Endothelial cell of umbilical vein (primary cell): ENCODE measurements at regions of chr9 and their contacts with region 1.

Region 1: DNA sequence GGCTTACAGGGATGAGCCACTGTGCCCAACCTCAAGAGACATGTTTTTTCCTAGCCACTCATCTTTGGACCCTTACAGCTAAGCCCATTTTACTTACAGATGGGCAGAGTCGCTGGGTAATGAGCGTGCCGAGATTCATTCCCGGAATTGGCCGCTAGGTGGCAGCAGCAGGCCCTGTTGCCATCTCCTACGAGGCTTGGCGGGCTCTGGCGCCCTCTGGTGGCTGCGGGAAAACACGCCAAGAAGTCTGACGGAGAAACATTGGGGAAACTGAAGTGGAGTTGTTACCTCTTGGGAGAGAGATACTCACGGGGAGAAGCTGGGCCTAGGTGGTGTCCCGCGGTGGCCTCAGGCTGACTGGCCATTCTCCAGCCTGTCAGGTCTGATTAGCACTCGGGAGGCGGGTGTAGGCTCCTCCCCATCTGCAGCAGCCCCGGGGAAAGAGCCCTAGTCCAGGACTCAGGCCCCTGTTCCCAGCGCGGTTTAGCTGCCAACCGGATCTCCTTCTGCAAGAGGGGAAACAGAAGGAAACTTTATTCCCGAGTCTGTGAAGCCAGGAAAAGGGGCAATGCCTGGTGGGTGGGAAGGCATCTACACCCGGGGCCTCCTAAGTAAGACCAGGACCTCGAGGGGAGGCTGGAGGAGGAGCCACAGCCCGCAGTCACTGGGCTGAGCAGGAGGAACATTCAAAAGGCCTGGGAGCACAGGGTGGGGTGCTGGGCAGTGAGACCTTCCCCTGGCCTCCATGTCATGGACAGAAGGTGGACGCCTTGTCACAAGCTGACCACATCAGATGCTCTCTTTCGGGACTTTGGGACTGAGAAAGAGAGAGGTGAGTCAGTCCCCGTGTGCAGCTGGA is 9.7 kb downstream of the PTGES2 start:
- DNase-seq: peak; percentile 93
- H3K4me3 ChIP-seq: no peak overlapping the region
- H3K27ac ChIP-seq: no peak overlapping the region
- H3K4me1 ChIP-seq: no peaks in the 10 kb centered on the region
- H3K27me3 ChIP-seq: no peaks in the 10 kb centered on the region
- CTCF ChIP-seq: peak; percentile 100
- POLR2A ChIP-seq: no peak

Region 2: GRCh38 chr9:127293328-127293727 is 824.5 kb before region 1 on chr9:
- CTCF ChIA-PET with region 1: no interaction called
- POLR2A ChIA-PET with region 1: no interaction called
- dilution Hi-C with region 1: no loop called
- intact Hi-C with region 1: no loop called
- DNase-seq: no peak
- H3K4me3 ChIP-seq: no peak overlapping the region
- H3K27ac ChIP-seq: no peak overlapping the region
- H3K4me1 ChIP-seq: no peaks in the 10 kb centered on the region
- H3K27me3 ChIP-seq: no peaks in the 10 kb centered on the region
- CTCF ChIP-seq: no peak
- POLR2A ChIP-seq: no peak

Region 3: DNA sequence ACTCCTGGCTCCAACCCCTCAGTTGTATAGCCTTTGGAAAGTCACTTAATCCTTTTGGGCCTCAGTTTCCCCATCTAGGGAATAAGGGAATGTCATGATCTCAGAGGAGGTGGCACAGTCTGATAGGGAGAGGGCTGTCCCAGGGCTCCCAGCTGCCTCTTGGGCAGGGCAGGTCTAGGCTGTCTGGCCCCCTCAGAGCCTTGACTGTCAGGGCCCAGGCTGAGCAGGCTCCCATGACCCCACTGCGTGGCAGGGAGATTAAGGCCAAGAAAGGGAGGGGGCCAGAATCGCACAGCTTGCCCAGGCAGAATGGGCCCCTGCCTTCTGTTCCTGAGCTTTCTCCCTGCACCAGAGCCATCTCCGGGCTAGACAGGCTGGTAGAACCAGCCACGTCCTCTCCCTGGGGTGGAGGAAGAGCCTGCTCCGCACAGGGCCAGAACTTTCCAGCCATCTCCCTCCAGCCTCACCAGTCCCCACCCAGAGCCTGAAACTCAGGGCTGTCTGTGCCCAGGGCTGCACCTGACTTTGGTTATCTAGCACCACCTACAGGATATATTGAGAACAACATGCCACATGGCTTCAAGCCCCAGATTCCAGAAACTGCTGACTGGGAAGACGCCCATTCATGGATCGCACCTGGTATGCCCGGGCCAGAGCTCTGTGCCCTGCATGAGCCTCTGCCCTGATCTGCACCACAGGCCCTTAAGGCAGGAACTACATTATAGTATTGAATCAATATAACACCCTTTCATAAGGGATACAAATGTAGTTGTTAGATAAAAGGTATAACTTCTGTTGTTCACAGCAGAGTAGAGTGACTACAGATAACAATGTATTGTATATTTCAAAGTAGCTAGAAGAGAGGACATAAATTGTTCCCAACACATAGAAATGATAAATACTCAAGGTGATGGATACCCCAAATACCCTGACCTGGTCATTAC is 82.7 kb before region 1 on chr9:
- CTCF ChIA-PET with region 1: interaction called, 15 read pairs
- POLR2A ChIA-PET with region 1: no interaction called
- dilution Hi-C with region 1: no loop called
- intact Hi-C with region 1: loop called (anchors 2 kb)
- DNase-seq: peak; percentile 84
- H3K4me3 ChIP-seq: no peak overlapping the region
- H3K27ac ChIP-seq: no peak overlapping the region
- H3K4me1 ChIP-seq: no peaks in the 10 kb centered on the region
- H3K27me3 ChIP-seq: no peaks in the 10 kb centered on the region
- CTCF ChIP-seq: peak; percentile 77 to 78
- POLR2A ChIP-seq: no peak

Region 4: GRCh38 chr9:128081056-128081455 is 36.8 kb before region 1 on chr9:
- CTCF ChIA-PET with region 1: interaction called, 16 read pairs
- POLR2A ChIA-PET with region 1: no interaction called
- dilution Hi-C with region 1: no loop called
- intact Hi-C with region 1: loop called (anchors 1 kb)
- DNase-seq: peak; percentile 41
- H3K4me3 ChIP-seq: no peak overlapping the region
- H3K27ac ChIP-seq: no peak overlapping the region
- H3K4me1 ChIP-seq: peaks cover 18% of the 10 kb centered on the region
- H3K27me3 ChIP-seq: no peaks in the 10 kb centered on the region
- CTCF ChIP-seq: no peak
- POLR2A ChIP-seq: no peak

Region 5: GRCh38 chr9:128094166-128094967 is 23.5 kb before region 1 on chr9:
- CTCF ChIA-PET with region 1: interaction called, 56 read pairs
- POLR2A ChIA-PET with region 1: no interaction called
- dilution Hi-C with region 1: no loop called
- intact Hi-C with region 1: loop called (anchors 1 kb)
- DNase-seq: peak; percentile 98
- H3K4me3 ChIP-seq: peak overlapping the region in 2 of 3 experiments; percentile 22 to 54
- H3K27ac ChIP-seq: peak overlapping the region; percentile 93
- H3K4me1 ChIP-seq: peaks cover 33% of the 10 kb centered on the region
- H3K27me3 ChIP-seq: no peaks in the 10 kb centered on the region
- CTCF ChIP-seq: no peak
- POLR2A ChIP-seq: peak; percentile 67

Region 6: GRCh38 chr9:128127990-128128835 is 10.4 kb after region 1 on chr9:
- CTCF ChIA-PET with region 1: interaction called, 31 read pairs
- POLR2A ChIA-PET with region 1: interaction called, 3 read pairs
- dilution Hi-C with region 1: no loop called
- intact Hi-C with region 1: loop called (anchors 1 kb)
- DNase-seq: peak; percentile 84
- H3K4me3 ChIP-seq: peak overlapping the region; percentile 83 to 92 (median 90)
- H3K27ac ChIP-seq: peak overlapping the region; percentile 76
- H3K4me1 ChIP-seq: peaks cover 11% of the 10 kb centered on the region
- H3K27me3 ChIP-seq: peaks cover 8 to 9% of the 10 kb centered on the region in 2 experiments
- CTCF ChIP-seq: no peak
- POLR2A ChIP-seq: peak; percentile 32

Region 7: DNA sequence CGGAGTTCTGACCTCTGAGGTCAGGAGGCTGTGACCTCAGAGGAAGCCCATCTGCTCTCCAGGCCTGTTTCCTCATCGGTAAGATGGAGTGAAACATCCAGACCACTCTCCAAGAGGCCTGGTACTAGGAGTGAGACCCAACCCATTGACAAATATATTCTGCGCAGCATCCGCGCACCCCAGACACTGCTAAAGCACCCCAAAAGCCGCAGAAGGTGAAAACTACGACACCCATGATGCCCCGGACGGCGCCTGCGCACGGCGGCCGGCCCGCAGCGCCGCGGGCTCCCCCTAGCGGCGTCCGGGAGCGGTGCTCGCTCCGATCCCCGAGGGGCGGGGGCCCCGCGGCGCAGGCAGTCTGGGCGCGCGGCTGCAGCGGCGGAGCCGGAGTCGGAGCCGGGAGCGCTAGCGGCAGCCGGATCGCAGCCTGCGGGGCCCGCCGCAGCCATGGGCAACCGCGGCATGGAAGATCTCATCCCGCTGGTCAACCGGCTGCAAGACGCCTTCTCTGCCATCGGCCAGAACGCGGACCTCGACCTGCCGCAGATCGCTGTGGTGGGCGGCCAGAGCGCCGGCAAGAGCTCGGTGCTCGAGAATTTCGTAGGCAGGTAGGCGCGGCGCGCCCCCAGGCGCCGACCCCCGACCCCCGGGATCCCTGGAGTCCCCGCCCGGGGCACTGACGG is 85.3 kb after region 1 on chr9 and contains the start of gene DNM1:
- CTCF ChIA-PET with region 1: no interaction called
- POLR2A ChIA-PET with region 1: no interaction called
- dilution Hi-C with region 1: no loop called
- intact Hi-C with region 1: no loop called
- DNase-seq: peak; percentile 51
- H3K4me3 ChIP-seq: peak within 1 kb of the TSS; percentile 24 to 39 (median 32)
- H3K27ac ChIP-seq: no peak within 1 kb of the TSS
- H3K4me1 ChIP-seq: peaks cover 10% of the 10 kb centered on the region
- H3K27me3 ChIP-seq: peaks cover 9 to 10% of the 10 kb centered on the region in 2 experiments
- CTCF ChIP-seq: peak; percentile 74 to 99
- POLR2A ChIP-seq: no peak
- total RNA-seq, gene DNM1: 2.9 and 7.9 TPM in 2 replicates